ENCODE measurements at regions of chr7 and their contacts with region 1.

Region 1: GRCh38 chr7:91940171-91940570 is 491 bp upstream of the AKAP9 start:
- DNase-seq: peak; percentile 37
- H3K4me3 Mint-ChIP-seq: peak overlapping the region; percentile 84
- H3K27ac Mint-ChIP-seq: peak overlapping the region; percentile 92
- H3K4me1 Mint-ChIP-seq: peaks cover 25% of the 10 kb centered on the region
- H3K27me3 Mint-ChIP-seq: no peaks in the 10 kb centered on the region

Region 2: GRCh38 chr7:91657483-91658071 is 282.6 kb before region 1 on chr7:
- CTCF ChIA-PET with region 1: no interaction called
- POLR2A ChIA-PET with region 1: no interaction called
- DNase-seq: no peak
- H3K4me3 Mint-ChIP-seq: no peak overlapping the region
- H3K27ac Mint-ChIP-seq: no peak overlapping the region
- H3K4me1 Mint-ChIP-seq: peaks cover 4% of the 10 kb centered on the region
- H3K27me3 Mint-ChIP-seq: no peaks in the 10 kb centered on the region

Region 3: GRCh38 chr7:91915401-91916050 is 24.6 kb before region 1 on chr7:
- CTCF ChIA-PET with region 1: interaction called, 5 read pairs
- POLR2A ChIA-PET with region 1: interaction called, 12 read pairs
- DNase-seq: no peak
- H3K4me3 Mint-ChIP-seq: no peak overlapping the region
- H3K27ac Mint-ChIP-seq: no peak overlapping the region
- H3K4me1 Mint-ChIP-seq: peaks cover 23% of the 10 kb centered on the region
- H3K27me3 Mint-ChIP-seq: peaks cover 10% of the 10 kb centered on the region